ENCODE measurements at regions of chr1 and their contacts with region 1.

Region 1: DNA sequence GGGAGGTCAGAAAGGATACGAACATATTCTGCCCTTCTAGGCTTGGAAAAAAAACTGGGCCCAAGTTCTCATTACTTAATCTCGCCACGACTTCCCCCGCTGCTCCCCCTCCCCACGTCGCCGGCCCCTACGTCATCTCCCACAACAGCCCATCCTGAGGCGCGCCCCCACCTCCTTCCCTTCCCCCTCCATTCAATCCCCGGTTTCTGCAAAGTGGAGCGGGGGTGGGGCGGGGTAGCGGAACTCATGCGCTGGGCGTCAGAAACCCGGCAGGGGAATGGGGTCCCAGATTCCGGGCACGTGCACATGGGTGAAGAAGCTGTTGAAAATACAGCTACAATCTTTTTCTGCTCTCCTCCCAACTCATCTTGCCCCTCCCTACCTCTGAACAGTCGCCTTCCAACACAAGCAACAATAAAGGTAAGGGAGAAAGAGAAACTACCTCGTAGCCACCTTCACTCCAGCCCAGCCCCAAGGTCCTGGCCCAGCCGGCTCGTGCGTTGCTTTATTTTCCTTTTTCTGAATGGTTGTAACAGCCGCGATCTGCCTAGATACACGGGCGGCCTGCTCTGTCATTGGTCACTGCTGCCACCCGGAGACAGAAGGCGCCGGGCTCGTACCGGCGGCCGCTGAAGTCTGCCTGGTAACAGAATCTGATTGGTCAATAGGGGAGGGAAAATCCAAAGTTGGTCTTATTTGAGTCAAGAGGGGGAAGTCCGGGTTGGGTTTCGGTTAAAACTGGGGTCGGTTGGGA is at the start of gene RFX5:
- DNase-seq: peak; percentile 96
- ATAC-seq: peak; percentile 98
- H3K4me3 Mint-ChIP-seq: peak within 1 kb of the TSS; percentile 96
- H3K27ac Mint-ChIP-seq: peak within 1 kb of the TSS; percentile 94
- H3K4me1 Mint-ChIP-seq: peaks cover 31% of the 10 kb centered on the region
- H3K27me3 Mint-ChIP-seq: no peaks in the 10 kb centered on the region
- total RNA-seq, gene RFX5: 47.6 to 50.4 TPM

Region 2: DNA sequence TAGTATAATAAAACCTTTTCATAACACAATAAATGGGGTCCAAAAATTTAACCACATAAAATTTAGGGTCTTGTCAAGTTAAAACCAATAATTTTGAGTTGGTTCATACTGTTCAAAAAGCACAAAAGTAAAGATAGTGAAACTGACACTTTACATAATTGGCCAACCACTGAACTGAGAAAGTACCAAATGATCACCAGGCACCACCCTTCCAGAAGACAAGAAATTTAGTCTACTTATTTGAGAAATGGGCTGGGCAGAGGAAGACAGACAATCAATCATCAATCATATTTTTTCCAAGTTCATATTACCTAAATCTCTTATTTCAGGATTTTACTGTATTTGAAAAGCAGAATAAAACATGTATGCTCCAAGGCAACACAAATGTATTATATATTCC is 643.5 kb before region 1 on chr1:
- CTCF ChIA-PET with region 1: no interaction called
- POLR2A ChIA-PET with region 1: no interaction called
- intact Hi-C with region 1: no loop called
- DNase-seq: no peak
- ATAC-seq: no peak
- H3K4me3 Mint-ChIP-seq: no peak overlapping the region
- H3K27ac Mint-ChIP-seq: no peak overlapping the region
- H3K4me1 Mint-ChIP-seq: no peaks in the 10 kb centered on the region
- H3K27me3 Mint-ChIP-seq: peaks cover 7% of the 10 kb centered on the region

Region 3: DNA sequence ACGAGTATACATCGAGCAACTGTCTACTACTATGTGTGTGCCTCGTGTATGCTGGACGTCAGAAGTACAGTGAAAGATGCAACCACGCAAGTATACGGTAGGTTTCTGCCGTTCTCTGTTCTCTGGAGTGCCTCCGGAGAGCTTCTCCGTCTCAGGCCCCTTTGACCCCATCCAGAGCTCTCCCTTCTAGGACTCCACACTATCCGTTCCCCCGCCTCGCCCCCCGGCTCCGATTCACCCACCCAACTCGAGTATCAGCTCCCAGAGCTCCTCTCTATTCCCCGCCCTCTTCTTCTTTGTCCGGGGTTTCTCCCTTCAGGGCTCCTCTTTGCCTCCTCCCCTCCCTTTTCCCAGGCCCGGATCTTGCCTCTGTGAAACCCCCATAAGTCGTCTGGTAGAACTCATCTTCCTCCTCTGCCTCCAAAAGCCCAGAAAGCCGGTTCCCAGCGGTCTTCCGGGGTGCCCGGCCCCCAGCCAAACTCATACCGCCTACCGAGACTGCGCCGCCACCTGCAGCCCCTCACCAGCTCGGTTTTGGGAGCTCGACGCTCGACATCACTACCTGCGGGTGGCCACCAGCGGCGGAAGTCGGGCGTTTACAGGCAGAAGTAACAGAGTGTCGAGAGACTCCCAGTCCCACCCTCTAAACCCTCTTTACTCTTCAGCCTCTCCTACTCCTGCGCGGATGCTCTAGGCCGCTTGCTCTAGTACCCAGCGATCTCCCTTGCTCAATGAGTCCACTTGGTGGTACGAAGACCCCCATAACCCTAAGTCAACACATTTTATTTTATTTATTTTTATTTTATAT is 157.1 kb before region 1 on chr1 and contains the start of gene VPS72:
- CTCF ChIA-PET with region 1: no interaction called
- POLR2A ChIA-PET with region 1: no interaction called
- intact Hi-C with region 1: loop called in 1 of 2 experiments (anchors 2 kb)
- DNase-seq: peak; percentile 93
- ATAC-seq: peak; percentile 96
- H3K4me3 Mint-ChIP-seq: peak within 1 kb of the TSS; percentile 96
- H3K27ac Mint-ChIP-seq: peak within 1 kb of the TSS; percentile 98
- H3K4me1 Mint-ChIP-seq: peaks cover 27% of the 10 kb centered on the region
- H3K27me3 Mint-ChIP-seq: no peaks in the 10 kb centered on the region
- total RNA-seq, gene VPS72: 77.1 to 77.8 TPM

Region 4: GRCh38 chr1:151568626-151569088 is 221.7 kb after region 1 on chr1:
- CTCF ChIA-PET with region 1: no interaction called
- POLR2A ChIA-PET with region 1: no interaction called
- intact Hi-C with region 1: no loop called
- DNase-seq: peak; percentile 13
- ATAC-seq: peak; percentile 57
- H3K4me3 Mint-ChIP-seq: no peak overlapping the region
- H3K27ac Mint-ChIP-seq: no peak overlapping the region
- H3K4me1 Mint-ChIP-seq: peaks cover 2% of the 10 kb centered on the region
- H3K27me3 Mint-ChIP-seq: no peaks in the 10 kb centered on the region

Measured in activated CD4-positive, alpha-beta T cell treated with anti-CD3 and anti-CD28 coated beads for 36 hours (primary cell).